Naive thymus-derived CD4-positive, alpha-beta T cell (primary cell): ENCODE measurements at regions of chr12 and their contacts with region 1.

Region 1: GRCh38 chr12:10562306-10562933 is 51.0 kb downstream of the MAGOHB start:
- DNase-seq: peak in 7 of 9 donors; percentile 5 to 54 (median 40)
- ATAC-seq: peak; percentile 51
- H3K4me3 ChIP-seq: no peak overlapping the region
- H3K4me3 Mint-ChIP-seq: no peak overlapping the region
- H3K27ac ChIP-seq: no peak overlapping the region
- H3K27ac Mint-ChIP-seq: no peak overlapping the region
- H3K4me1 ChIP-seq: peaks cover 0 to 28% of the 10 kb centered on the region in 2 donors
- H3K4me1 Mint-ChIP-seq: peaks cover 0 to 16% (median 10%) of the 10 kb centered on the region in 7 donors
- H3K27me3 ChIP-seq: no peaks in the 10 kb centered on the region
- H3K27me3 Mint-ChIP-seq: peaks cover 7 to 40% (median 16%) of the 10 kb centered on the region in 5 donors

Region 2: DNA sequence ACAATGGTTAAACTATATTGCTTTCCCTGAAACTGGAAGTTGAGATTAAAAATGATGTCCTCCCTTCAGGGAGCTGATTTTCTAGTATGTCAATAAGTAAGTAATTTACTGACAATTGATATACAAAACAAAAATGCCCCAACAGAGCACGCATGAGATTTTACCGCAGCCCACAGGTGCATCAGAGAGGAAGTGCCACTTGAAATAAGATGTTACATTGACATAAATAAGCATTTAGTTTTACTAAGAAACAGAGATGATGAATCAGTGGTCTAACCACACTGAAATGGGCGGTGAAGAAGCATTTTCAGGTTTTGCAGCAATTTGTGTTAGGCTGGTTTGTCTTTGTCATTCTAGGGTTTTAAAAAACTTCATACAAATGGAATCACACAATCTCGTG is 820.7 kb before region 1 on chr12:
- CTCF ChIA-PET with region 1: no interaction called
- POLR2A ChIA-PET with region 1: no interaction called
- intact Hi-C with region 1: loop called in 1 of 2 experiments (anchors 5 kb)
- DNase-seq: peak in 8 of 9 donors; percentile 63 to 95 (median 90)
- ATAC-seq: peak; percentile 84
- H3K4me3 ChIP-seq: peak overlapping the region; percentile 15
- H3K4me3 Mint-ChIP-seq: peak overlapping the region; percentile 22 to 95 (median 83)
- H3K27ac ChIP-seq: peak overlapping the region; percentile 76
- H3K27ac Mint-ChIP-seq: peak overlapping the region; percentile 89 to 100 (median 98)
- H3K4me1 ChIP-seq: peaks cover 55 to 59% of the 10 kb centered on the region in 2 donors
- H3K4me1 Mint-ChIP-seq: peaks cover 51 to 81% (median 71%) of the 10 kb centered on the region in 7 donors
- H3K27me3 ChIP-seq: no peaks in the 10 kb centered on the region
- H3K27me3 Mint-ChIP-seq: peaks cover 0 to 6% (median 0%) of the 10 kb centered on the region in 5 donors

Region 3: DNA sequence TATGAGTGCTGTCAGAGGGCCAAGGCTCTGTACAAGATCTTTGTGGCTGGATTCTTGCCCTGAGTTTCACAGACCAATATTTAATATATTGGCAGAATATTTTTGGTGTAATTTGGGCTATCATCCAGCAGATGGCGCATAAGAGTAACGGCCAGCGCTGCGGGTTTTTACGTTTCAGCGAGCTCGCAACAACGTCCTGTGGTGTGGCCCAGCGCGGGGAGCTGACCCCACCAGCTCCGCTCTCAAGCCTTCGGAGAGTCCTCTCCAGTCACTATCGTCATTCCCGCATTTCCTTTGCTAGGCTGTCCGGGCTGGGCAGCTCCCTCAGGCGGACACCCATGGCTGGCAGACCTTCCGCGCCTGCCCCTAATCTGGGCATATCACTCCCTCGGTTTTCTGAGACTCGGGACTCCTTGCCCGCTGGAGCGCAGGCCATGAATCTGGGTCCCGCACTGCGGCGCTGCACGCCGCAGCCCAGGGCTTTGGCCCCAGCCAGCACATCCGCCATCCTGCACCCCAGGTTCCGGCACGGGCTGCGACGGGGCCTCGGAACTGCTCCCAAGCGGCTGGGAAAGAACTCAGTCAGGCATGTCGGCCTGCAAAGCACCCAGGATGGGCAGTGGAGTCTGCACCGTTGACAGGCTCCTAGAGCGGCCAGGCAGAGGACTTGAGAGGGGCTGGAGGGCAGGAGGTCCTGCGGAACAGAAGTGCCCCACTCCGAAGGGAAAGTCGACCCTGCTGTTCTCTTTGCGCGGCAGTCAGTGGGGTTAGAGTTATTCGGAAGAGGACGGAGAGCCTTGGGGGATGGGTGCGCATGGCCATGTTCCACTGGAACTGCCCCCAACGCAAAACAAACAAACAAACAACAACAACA is 408.9 kb before region 1 on chr12:
- CTCF ChIA-PET with region 1: no interaction called
- POLR2A ChIA-PET with region 1: no interaction called
- intact Hi-C with region 1: loop called (anchors 1 to 5 kb)
- DNase-seq: peak; percentile 31 to 71 (median 58)
- ATAC-seq: peak; percentile 93
- H3K4me3 ChIP-seq: peak overlapping the region; percentile 83
- H3K4me3 Mint-ChIP-seq: peak overlapping the region; percentile 89 to 96 (median 93)
- H3K27ac ChIP-seq: peak overlapping the region; percentile 55
- H3K27ac Mint-ChIP-seq: peak overlapping the region in 7 of 9 donors; percentile 58 to 91 (median 82)
- H3K4me1 ChIP-seq: peaks cover 6 to 7% of the 10 kb centered on the region in 2 donors
- H3K4me1 Mint-ChIP-seq: peaks cover 5 to 15% (median 11%) of the 10 kb centered on the region in 7 donors
- H3K27me3 ChIP-seq: peaks cover 0 to 3% of the 10 kb centered on the region in 2 donors
- H3K27me3 Mint-ChIP-seq: peaks cover 0 to 66% (median 0%) of the 10 kb centered on the region in 5 donors

Region 4: DNA sequence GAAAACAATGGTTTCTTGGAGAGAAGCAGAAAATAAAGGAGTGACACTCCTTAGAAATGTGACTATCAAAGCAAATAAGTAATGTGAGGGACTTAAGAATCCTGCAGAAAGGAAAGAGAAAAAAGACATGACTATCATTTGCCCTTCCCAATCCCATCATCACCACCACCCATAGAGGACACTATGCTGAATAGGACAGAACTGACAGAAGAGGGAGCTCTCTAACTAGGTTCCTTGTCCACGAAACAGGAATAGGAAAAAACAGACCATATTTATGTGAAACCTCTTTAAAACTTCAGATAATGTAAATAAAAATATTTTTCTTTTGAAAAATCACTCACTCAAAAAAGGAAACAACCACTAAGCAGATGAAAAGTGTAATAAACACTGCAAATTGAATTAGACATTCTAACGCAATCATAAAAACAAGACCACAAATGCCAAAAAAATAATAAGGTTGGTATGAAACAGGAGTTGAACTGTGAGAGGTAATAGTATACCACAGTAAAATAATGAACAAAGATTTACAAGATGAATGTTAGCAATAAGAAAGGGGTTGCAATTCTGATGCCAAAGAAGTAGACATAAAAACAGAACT is 230.7 kb before region 1 on chr12:
- CTCF ChIA-PET with region 1: interaction called, 8 read pairs
- POLR2A ChIA-PET with region 1: no interaction called
- intact Hi-C with region 1: loop called (anchors 1 kb)
- DNase-seq: peak in 7 of 9 donors; percentile 9 to 51 (median 20)
- ATAC-seq: peak; percentile 63
- H3K4me3 ChIP-seq: no peak overlapping the region
- H3K4me3 Mint-ChIP-seq: no peak overlapping the region
- H3K27ac ChIP-seq: no peak overlapping the region
- H3K27ac Mint-ChIP-seq: peak overlapping the region in 1 of 9 donors; percentile 57
- H3K4me1 ChIP-seq: no peaks in the 10 kb centered on the region
- H3K4me1 Mint-ChIP-seq: peaks cover 0 to 6% (median 0%) of the 10 kb centered on the region in 7 donors
- H3K27me3 ChIP-seq: no peaks in the 10 kb centered on the region
- H3K27me3 Mint-ChIP-seq: peaks cover 0 to 6% (median 0%) of the 10 kb centered on the region in 5 donors

Region 5: GRCh38 chr12:10618338-10618987 is 56.0 kb after region 1 on chr12:
- CTCF ChIA-PET with region 1: no interaction called
- POLR2A ChIA-PET with region 1: no interaction called
- intact Hi-C with region 1: no loop called
- DNase-seq: no peak
- ATAC-seq: no peak
- H3K4me3 ChIP-seq: no peak overlapping the region
- H3K4me3 Mint-ChIP-seq: no peak overlapping the region
- H3K27ac ChIP-seq: no peak overlapping the region
- H3K27ac Mint-ChIP-seq: no peak overlapping the region
- H3K4me1 ChIP-seq: peaks cover 0 to 5% of the 10 kb centered on the region in 2 donors
- H3K4me1 Mint-ChIP-seq: peaks cover 0 to 8% (median 5%) of the 10 kb centered on the region in 7 donors
- H3K27me3 ChIP-seq: no peaks in the 10 kb centered on the region
- H3K27me3 Mint-ChIP-seq: peaks cover 23 to 62% (median 34%) of the 10 kb centered on the region in 5 donors